Psoas muscle (tissue), 8 donors: ENCODE measurements at regions of chrX and their contacts with region 1.

Region 1: GRCh38 chrX:15335135-15336022 is at the start of gene PIGA:
- DNase-seq: peak; percentile 94 to 97
- ATAC-seq: peak; percentile 96 to 99 (median 98)
- H3K4me3 ChIP-seq: peak within 1 kb of the TSS; percentile 73
- H3K27ac ChIP-seq: peak within 1 kb of the TSS; percentile 84
- H3K4me1 ChIP-seq: peaks cover 24% of the 10 kb centered on the region
- H3K27me3 ChIP-seq: no peaks in the 10 kb centered on the region
- CTCF ChIP-seq: no peak
- total RNA-seq, gene PIGA: 2.6 to 5.8 (median 3.6) TPM

Region 2: GRCh38 chrX:15098505-15098904 is 236.9 kb before region 1 on chrX:
- intact Hi-C with region 1: no loop called
- DNase-seq: no peak
- ATAC-seq: no peak
- H3K4me3 ChIP-seq: no peak overlapping the region
- H3K27ac ChIP-seq: no peak overlapping the region
- H3K4me1 ChIP-seq: no peaks in the 10 kb centered on the region
- H3K27me3 ChIP-seq: no peaks in the 10 kb centered on the region
- CTCF ChIP-seq: no peak

Region 3: DNA sequence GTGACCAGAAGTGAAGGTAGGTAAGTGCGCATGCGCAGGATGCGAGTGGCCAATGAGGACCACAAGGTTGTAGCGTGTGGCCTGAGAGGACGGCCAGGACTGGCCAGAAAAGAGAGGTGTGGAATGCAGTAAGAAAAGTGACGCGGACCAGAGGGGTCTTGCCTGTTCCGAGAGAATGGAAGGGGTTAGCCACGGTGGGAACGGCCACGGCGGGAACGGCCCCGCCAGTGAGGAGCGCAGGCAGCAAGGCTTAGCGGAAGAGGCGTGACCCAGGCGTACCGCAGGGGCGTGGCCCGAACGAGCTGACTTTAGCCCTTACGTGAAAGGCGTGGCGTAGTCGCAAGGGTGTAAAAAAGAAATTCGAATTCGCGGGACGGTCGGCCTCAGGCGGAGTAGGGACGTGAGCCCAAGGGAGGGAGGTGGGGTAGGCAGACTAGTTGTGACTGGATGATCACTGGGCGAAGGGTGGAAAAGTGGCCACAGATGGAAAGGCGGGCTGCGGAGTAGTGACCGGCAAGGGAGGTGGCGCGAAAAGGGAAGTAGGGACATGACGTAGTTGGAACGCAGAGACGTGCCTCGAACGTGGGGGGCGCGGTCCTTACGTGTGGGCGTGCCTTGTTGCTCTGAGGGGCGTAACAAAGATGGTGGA is 339.6 kb after region 1 on chrX:
- intact Hi-C with region 1: loop called in 1 of 2 experiments (anchors 10 kb)
- DNase-seq: peak; percentile 96 to 97
- ATAC-seq: peak; percentile 93 to 96 (median 94)
- H3K4me3 ChIP-seq: peak overlapping the region; percentile 82
- H3K27ac ChIP-seq: peak overlapping the region; percentile 97
- H3K4me1 ChIP-seq: peaks cover 14% of the 10 kb centered on the region
- H3K27me3 ChIP-seq: peaks cover 0 to 4% (median 0%) of the 10 kb centered on the region in 3 donors
- CTCF ChIP-seq: no peak